ENCODE measurements at regions of chr3 and their contacts with region 1.

Region 1: DNA sequence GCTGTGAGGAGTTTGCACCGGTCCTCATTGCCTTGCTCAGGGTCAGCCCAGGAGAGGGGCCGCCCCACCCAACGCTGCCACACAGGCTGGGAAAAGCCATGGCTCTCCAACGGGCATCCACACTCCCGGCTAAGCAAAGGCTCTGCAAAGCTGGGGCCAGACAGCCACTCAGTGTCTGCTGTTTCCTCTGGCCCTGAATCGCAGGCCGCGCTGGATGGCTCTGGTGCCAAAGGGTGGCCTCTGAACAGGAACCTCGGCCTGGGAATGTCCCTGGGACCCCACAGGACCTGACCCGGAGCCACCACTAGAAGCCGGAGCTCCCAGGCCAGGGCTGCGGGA is 42.9 kb downstream of the RPN1 start:
- DNase-seq: no peak
- ATAC-seq: no peak
- H3K4me3 ChIP-seq: no peak overlapping the region
- H3K27ac ChIP-seq: no peak overlapping the region
- H3K4me1 ChIP-seq: no peaks in the 10 kb centered on the region
- H3K27me3 ChIP-seq: no peaks in the 10 kb centered on the region
- CTCF ChIP-seq: no peak
- POLR2A ChIP-seq: no peak
- RAD21 ChIP-seq: no peak

Region 2: GRCh38 chr3:128360705-128361271 is 246.9 kb before region 1 on chr3:
- CTCF ChIA-PET with region 1: no interaction called
- POLR2A ChIA-PET with region 1: no interaction called
- dilution Hi-C with region 1: no loop called
- in situ Hi-C with region 1: no loop called
- intact Hi-C with region 1: no loop called
- DNase-seq: no peak
- ATAC-seq: peak; percentile 60
- H3K4me3 ChIP-seq: no peak overlapping the region
- H3K27ac ChIP-seq: no peak overlapping the region
- H3K4me1 ChIP-seq: peaks cover 13% of the 10 kb centered on the region
- H3K27me3 ChIP-seq: no peaks in the 10 kb centered on the region
- CTCF ChIP-seq: no peak
- POLR2A ChIP-seq: no peak
- RAD21 ChIP-seq: no peak

Region 3: GRCh38 chr3:128426128-128426921 is 181.4 kb before region 1 on chr3:
- CTCF ChIA-PET with region 1: interaction called, 3 read pairs
- POLR2A ChIA-PET with region 1: no interaction called
- dilution Hi-C with region 1: no loop called
- in situ Hi-C with region 1: loop called (anchors 5 kb)
- intact Hi-C with region 1: loop called (anchors 1 kb)
- DNase-seq: no peak
- ATAC-seq: peak; percentile 98
- H3K4me3 ChIP-seq: no peak overlapping the region
- H3K27ac ChIP-seq: no peak overlapping the region
- H3K4me1 ChIP-seq: no peaks in the 10 kb centered on the region; the same call in 1 of the 2 replicates
- H3K27me3 ChIP-seq: peaks cover 22% of the 10 kb centered on the region
- CTCF ChIP-seq: peak; percentile 94
- POLR2A ChIP-seq: no peak
- RAD21 ChIP-seq: peak; percentile 94

Region 4: GRCh38 chr3:128497387-128498126 is 110.1 kb before region 1 on chr3:
- CTCF ChIA-PET with region 1: no interaction called
- POLR2A ChIA-PET with region 1: no interaction called
- dilution Hi-C with region 1: no loop called
- in situ Hi-C with region 1: no loop called
- intact Hi-C with region 1: loop called (anchors 5 kb)
- DNase-seq: no peak
- ATAC-seq: peak; percentile 69
- H3K4me3 ChIP-seq: peak overlapping the region; percentile 57
- H3K27ac ChIP-seq: no peak overlapping the region
- H3K4me1 ChIP-seq: peaks cover 5% of the 10 kb centered on the region
- H3K27me3 ChIP-seq: peaks cover 34% of the 10 kb centered on the region
- CTCF ChIP-seq: peak; percentile 54
- POLR2A ChIP-seq: no peak
- RAD21 ChIP-seq: peak; percentile 57